ENCODE measurements at regions of chr12 and their contacts with region 1.

Region 1: GRCh38 chr12:79737875-79738718 is 47.3 kb upstream of the PAWR start:
- DNase-seq: peak; percentile 18
- H3K4me3 Mint-ChIP-seq: no peak overlapping the region
- H3K27ac Mint-ChIP-seq: no peak overlapping the region
- H3K4me1 Mint-ChIP-seq: no peaks in the 10 kb centered on the region
- H3K27me3 Mint-ChIP-seq: peaks cover 11% of the 10 kb centered on the region

Region 2: GRCh38 chr12:79407671-79408622 is 330.1 kb before region 1 on chr12:
- CTCF ChIA-PET with region 1: no interaction called
- POLR2A ChIA-PET with region 1: no interaction called
- intact Hi-C with region 1: loop called (anchors 5 kb)
- DNase-seq: peak; percentile 15
- H3K4me3 Mint-ChIP-seq: no peak overlapping the region
- H3K27ac Mint-ChIP-seq: no peak overlapping the region
- H3K4me1 Mint-ChIP-seq: no peaks in the 10 kb centered on the region
- H3K27me3 Mint-ChIP-seq: no peaks in the 10 kb centered on the region

Region 3: DNA sequence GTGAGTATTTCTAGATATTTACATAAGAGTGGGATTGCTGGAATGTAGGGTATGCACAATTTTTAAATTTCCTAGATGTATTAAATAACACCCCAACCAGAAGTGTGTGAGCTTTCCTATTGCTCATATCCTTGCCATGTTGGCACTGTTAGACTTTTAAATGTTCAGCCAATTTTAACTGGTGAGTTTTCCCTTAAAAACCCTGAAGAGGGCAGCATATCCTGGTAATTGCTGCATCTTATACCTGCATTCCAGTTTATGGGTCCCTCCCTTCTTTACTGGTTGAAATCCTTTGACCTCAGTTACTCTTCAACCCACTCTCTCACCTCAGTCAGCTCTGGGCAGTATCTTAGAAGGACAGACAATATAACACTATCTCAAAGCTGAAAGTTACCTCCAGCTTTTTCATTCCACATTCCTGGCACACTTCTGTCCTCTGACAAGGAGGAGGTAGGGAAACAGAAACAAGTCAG is 317.9 kb before region 1 on chr12:
- CTCF ChIA-PET with region 1: no interaction called
- POLR2A ChIA-PET with region 1: no interaction called
- intact Hi-C with region 1: loop called (anchors 5 kb)
- DNase-seq: no peak
- H3K4me3 Mint-ChIP-seq: no peak overlapping the region
- H3K27ac Mint-ChIP-seq: no peak overlapping the region
- H3K4me1 Mint-ChIP-seq: no peaks in the 10 kb centered on the region
- H3K27me3 Mint-ChIP-seq: no peaks in the 10 kb centered on the region

Region 4: DNA sequence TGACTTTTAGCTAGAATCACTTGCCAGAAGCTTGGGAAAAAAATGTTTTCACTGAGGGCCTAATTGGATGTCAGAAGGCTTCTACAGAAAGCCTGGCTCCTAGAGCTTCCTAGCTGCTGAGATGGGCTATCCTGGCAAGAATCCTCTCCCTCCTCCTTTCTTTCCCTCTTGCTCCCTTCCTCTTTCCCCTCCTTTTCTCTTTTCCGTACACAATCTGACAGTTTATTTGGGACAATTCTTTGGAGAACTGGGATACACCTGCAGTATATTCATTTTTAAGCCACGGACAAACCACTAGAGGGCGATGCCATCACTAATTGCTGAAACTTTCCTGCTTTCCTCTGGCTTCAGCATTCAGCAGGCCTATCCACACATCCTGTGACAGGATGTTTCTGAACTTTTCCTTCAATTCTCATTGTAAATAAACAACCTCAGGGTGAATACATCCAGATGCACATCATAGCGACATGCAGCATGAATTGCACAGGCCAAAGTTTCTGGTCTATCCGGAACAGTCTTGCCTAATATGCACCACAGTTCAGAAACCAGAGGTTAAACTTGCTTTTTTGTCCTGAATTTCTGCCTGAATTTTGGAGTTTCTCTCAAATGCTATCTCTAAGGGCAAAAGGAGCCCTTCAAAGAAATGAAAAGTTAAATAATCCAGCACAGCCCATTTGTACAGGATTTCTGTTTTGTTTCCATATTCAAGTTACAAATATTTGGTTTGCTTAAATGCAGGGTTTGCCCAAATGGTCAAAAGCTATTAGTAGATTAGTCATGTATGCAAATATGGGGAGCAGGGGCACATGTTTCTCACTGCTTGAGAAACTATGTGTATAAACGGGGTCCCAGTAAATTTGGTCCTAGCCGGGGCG is 190.1 kb before region 1 on chr12:
- CTCF ChIA-PET with region 1: interaction called, 3 read pairs
- POLR2A ChIA-PET with region 1: no interaction called
- intact Hi-C with region 1: loop called (anchors 2 kb)
- DNase-seq: peak; percentile 11
- H3K4me3 Mint-ChIP-seq: no peak overlapping the region
- H3K27ac Mint-ChIP-seq: no peak overlapping the region
- H3K4me1 Mint-ChIP-seq: no peaks in the 10 kb centered on the region
- H3K27me3 Mint-ChIP-seq: no peaks in the 10 kb centered on the region

Region 5: GRCh38 chr12:79690638-79691493 is 47.2 kb before region 1 on chr12 and contains the start of gene PAWR:
- CTCF ChIA-PET with region 1: interaction called, 4 read pairs
- POLR2A ChIA-PET with region 1: no interaction called
- intact Hi-C with region 1: loop called (anchors 2 kb)
- DNase-seq: peak; percentile 38
- H3K4me3 Mint-ChIP-seq: peak within 1 kb of the TSS; percentile 72
- H3K27ac Mint-ChIP-seq: no peak within 1 kb of the TSS
- H3K4me1 Mint-ChIP-seq: peaks cover 9% of the 10 kb centered on the region
- H3K27me3 Mint-ChIP-seq: peaks cover 48% of the 10 kb centered on the region
- total RNA-seq, gene PAWR: 4.6 to 5.3 TPM